ENCODE measurements at regions of chr5 and their contacts with region 1.

Region 1: DNA sequence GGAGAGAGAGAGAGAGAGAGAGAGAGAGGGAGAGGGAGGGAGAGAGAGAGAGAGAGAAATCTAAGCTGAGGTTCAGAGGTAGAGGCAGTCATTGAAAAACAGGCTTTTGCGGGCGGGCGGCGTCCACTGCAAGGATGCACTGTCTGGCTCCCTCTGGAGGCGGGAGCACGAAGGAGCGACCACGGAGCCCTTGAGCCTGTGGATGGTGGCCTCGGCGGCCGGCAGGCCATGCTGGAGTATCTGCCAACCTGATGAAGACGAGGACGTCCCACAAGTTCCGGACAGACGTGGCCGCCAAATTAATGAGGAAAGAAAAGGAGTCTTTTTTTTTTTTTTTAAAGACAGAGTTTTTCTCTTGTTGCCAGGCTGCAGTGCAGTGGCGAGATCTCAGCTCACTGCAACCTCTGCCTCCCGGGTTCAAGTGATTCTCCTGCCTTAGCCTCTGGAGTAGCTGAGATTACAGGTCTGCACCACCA is 2.2 kb upstream of the CCDC125 start:
- DNase-seq: peak; percentile 86
- H3K4me3 ChIP-seq: no peak overlapping the region
- H3K27ac ChIP-seq: no peak overlapping the region
- H3K4me1 ChIP-seq: no peaks in the 10 kb centered on the region
- H3K27me3 ChIP-seq: no peaks in the 10 kb centered on the region
- CTCF ChIP-seq: peak; percentile 83

Region 2: DNA sequence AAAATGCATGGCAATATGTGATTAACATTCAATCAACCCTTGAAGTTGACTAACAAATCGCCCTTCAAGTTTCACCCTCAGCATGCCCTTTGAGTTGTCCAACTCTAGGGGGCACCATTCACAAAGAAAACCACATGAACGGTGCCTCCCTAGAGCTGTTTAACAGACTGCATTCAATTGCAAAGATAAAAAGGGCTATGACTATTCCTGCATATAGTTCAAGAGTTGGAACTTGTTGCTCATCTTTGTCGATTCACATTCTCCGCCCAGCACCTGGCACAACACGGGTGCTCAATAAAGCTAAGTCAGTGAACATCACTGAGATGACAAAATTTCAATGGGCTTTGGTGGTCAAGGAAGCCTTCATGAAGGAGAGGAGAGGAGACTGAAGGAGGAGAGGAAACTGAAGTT is 310.6 kb before region 1 on chr5:
- CTCF ChIA-PET with region 1: no interaction called
- POLR2A ChIA-PET with region 1: no interaction called
- intact Hi-C with region 1: loop called (anchors 10 kb)
- DNase-seq: peak; percentile 80
- H3K4me3 ChIP-seq: no peak overlapping the region
- H3K27ac ChIP-seq: no peak overlapping the region
- H3K4me1 ChIP-seq: no peaks in the 10 kb centered on the region
- H3K27me3 ChIP-seq: no peaks in the 10 kb centered on the region
- CTCF ChIP-seq: peak; percentile 88

Region 3: GRCh38 chr5:69432412-69433206 is 97.8 kb after region 1 on chr5:
- CTCF ChIA-PET with region 1: no interaction called
- POLR2A ChIA-PET with region 1: no interaction called
- intact Hi-C with region 1: no loop called
- DNase-seq: no peak
- H3K4me3 ChIP-seq: no peak overlapping the region
- H3K27ac ChIP-seq: no peak overlapping the region
- H3K4me1 ChIP-seq: peaks cover 6% of the 10 kb centered on the region
- H3K27me3 ChIP-seq: no peaks in the 10 kb centered on the region
- CTCF ChIP-seq: no peak

Measured in A673 (cell line).